Endothelial cell of umbilical vein (primary cell): ENCODE measurements at regions of chr10 and their contacts with region 1.

Region 1: DNA sequence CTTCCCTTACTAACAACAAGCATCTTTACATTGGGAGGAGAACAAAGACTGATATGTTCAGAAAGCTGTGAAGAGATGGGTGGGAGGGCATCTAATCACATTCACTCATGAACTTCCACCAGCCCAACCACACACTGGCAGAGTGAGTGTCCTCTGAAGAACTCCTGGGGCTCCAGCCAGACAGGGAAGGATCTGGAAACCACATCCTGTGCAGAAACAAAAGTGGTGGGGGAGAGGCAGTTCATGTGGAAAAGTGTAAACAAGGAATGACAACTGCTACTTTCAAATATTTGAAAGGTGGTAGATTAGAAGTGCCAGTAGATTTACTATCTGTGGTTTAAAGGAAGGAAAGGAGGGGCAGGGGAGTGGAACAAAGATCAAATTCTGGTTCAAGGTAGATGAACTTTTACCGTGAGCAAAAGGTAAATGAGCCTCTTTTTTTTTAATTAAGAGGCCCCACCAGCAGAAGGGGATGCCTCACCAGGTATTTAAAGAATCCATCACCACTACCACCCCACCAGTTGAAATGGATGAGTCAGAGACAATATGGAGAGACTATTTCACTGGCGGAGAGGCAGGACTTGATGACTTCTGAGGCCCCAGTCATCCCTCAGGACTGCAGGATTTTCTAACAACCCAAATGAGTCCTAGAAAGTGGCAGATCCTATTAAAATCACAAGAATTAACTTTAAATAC is 34.5 kb downstream of the GOT1 start:
- DNase-seq: peak; percentile 57
- H3K4me3 ChIP-seq: no peak overlapping the region
- H3K27ac ChIP-seq: peak overlapping the region; percentile 32
- H3K4me1 ChIP-seq: peaks cover 24% of the 10 kb centered on the region
- H3K27me3 ChIP-seq: no peaks in the 10 kb centered on the region
- CTCF ChIP-seq: no peak
- POLR2A ChIP-seq: no peak

Region 2: GRCh38 chr10:99360934-99361333 is 35.0 kb before region 1 on chr10:
- CTCF ChIA-PET with region 1: no interaction called
- POLR2A ChIA-PET with region 1: no interaction called
- dilution Hi-C with region 1: no loop called
- intact Hi-C with region 1: no loop called
- DNase-seq: no peak
- H3K4me3 ChIP-seq: no peak overlapping the region
- H3K27ac ChIP-seq: no peak overlapping the region
- H3K4me1 ChIP-seq: no peaks in the 10 kb centered on the region
- H3K27me3 ChIP-seq: peaks cover 9 to 11% of the 10 kb centered on the region in 2 experiments
- CTCF ChIP-seq: no peak
- POLR2A ChIP-seq: no peak

Region 3: DNA sequence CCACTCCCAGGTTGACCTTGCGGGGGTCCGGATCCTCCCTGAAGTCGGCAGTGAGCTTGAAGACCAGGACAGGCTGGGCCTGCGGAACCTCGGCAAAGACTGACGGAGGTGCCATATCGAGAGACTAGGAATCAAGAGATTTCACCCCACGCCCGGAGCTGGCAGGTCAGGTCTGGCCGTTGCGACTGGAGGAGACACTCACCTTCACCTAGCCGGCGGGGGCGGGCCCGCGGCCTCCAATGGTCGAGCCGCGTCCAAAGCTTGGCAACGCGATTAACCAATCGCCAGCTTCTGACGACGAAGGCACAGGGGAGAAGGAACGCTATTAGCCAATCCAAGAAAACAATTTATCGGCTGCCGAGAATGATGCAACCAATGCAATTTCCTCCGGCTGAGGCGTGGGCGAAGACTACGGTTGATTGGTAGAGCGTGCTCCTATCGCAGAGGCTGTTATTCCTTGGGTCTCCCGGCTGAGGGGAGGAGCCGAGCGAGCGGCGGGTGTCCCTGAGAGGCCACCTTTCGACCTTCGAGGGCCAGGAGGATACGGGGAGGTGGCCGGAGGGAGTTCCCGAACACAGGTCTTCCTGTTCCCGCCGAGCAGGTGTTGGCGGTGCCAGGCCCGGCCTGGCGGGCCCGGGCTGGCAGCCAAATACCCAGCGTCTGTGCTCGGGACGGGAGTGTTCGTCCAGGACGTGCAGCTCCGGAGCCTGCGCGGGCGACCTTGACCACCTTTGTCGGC is 34.7 kb after region 1 on chr10 and contains the start of gene GOT1:
- CTCF ChIA-PET with region 1: interaction called, 151 read pairs
- POLR2A ChIA-PET with region 1: no interaction called
- dilution Hi-C with region 1: no loop called
- intact Hi-C with region 1: loop called (anchors 1 kb)
- DNase-seq: peak; percentile 99
- H3K4me3 ChIP-seq: peak within 1 kb of the TSS; percentile 53 to 87 (median 74)
- H3K27ac ChIP-seq: peak within 1 kb of the TSS; percentile 42
- H3K4me1 ChIP-seq: peaks cover 14% of the 10 kb centered on the region
- H3K27me3 ChIP-seq: no peaks in the 10 kb centered on the region
- CTCF ChIP-seq: no peak
- POLR2A ChIP-seq: peak; percentile 68
- total RNA-seq, gene GOT1: 36.3 and 40.7 TPM in 2 replicates

Region 4: DNA sequence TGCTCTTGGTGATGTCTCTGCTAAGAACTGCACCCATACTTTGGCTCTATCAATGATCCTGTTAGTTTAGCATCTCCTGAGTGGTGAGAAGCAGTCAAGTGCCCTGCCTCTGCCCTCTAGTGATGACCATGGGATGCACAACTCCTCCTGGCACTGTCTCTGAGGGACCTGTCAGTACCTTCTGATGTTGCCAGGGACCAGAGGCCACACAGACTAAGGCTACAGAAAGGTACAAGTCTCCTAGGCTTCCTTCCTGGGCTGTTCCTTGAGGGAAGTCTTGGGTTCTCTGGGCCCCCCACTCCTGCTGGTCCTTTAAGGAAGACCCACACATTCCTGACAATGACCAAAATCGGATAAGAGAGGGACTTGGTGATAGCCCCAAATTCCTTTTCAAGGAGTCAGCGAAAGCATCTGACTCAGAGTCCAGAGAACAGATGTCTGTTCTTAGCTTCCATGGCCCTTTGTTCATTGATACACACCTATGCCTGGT is 152.2 kb after region 1 on chr10:
- CTCF ChIA-PET with region 1: interaction called, 5 read pairs
- POLR2A ChIA-PET with region 1: no interaction called
- dilution Hi-C with region 1: no loop called
- intact Hi-C with region 1: loop called (anchors 5 kb)
- DNase-seq: peak; percentile 47
- H3K4me3 ChIP-seq: no peak overlapping the region
- H3K27ac ChIP-seq: no peak overlapping the region
- H3K4me1 ChIP-seq: no peaks in the 10 kb centered on the region
- H3K27me3 ChIP-seq: peaks cover 24 to 48% of the 10 kb centered on the region in 2 experiments
- CTCF ChIP-seq: peak in 1 of 2 donors; percentile 67
- POLR2A ChIP-seq: no peak

Region 5: DNA sequence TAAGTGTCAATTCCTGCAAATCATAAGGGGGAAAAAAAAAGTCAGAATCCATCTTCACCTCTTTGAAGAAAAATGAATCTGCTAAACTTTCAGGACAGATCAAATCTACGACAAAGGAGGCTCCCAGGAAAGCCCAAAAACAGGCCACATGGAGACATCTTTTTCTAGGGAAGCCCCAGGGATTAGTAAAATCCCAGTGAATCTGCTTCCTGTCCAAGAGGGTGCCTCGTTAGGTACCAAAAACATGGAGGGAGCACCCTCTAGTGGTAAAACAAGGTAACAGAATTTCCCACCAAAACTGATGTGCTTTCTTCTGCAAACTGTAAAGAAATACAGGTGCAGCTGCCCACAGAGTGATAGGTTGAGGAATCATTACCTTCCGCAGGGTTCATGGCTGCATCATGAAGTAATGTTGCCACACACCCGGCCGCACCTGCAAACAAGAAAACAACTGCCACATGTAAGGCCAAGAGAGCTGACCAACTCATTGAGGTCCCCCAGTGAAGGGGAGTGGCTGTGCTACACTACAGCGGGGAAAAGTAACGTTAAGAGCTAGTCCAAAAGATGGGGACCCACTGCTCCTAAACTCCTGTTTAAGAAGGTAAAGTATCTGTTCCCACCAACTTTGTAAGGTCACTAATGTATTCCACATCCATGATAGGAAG is 216.4 kb after region 1 on chr10:
- CTCF ChIA-PET with region 1: interaction called, 65 read pairs
- POLR2A ChIA-PET with region 1: no interaction called
- dilution Hi-C with region 1: no loop called
- intact Hi-C with region 1: loop called (anchors 1 kb)
- DNase-seq: peak; percentile 71
- H3K4me3 ChIP-seq: no peak overlapping the region
- H3K27ac ChIP-seq: no peak overlapping the region
- H3K4me1 ChIP-seq: peaks cover 2% of the 10 kb centered on the region
- H3K27me3 ChIP-seq: no peaks in the 10 kb centered on the region
- CTCF ChIP-seq: peak; percentile 66 to 67
- POLR2A ChIP-seq: no peak

Region 6: DNA sequence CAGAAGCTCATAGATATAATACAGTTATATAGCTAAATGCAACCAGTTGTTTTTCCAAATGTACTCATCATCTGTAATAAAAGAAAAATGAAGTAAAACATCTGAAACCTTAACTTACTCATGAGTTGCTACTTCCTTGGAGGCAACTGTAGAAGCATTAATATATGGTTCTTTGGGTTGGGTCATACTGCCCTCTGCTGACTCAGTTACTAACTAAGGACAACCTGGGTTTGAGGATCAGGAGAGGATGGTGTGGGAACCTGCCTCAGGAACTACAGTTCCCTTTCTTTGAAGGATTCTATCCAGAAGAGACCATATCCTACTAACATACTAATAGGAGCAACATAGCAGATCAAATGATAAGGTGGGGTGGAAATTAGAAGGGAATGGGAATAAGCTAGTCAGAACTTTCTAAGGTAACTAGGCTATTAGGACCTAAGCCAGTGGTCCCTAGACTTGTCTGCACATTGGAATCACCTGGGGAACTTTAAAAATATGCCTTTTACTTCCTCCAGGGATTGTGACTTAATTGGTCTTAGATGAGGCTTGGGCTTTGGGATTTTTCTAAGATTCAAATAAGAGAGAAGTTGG is 315.3 kb after region 1 on chr10:
- CTCF ChIA-PET with region 1: no interaction called
- POLR2A ChIA-PET with region 1: no interaction called
- dilution Hi-C with region 1: no loop called
- intact Hi-C with region 1: loop called (anchors 2 kb)
- DNase-seq: peak; percentile 67
- H3K4me3 ChIP-seq: no peak overlapping the region
- H3K27ac ChIP-seq: no peak overlapping the region
- H3K4me1 ChIP-seq: no peaks in the 10 kb centered on the region
- H3K27me3 ChIP-seq: no peaks in the 10 kb centered on the region
- CTCF ChIP-seq: peak; percentile 36 to 46
- POLR2A ChIP-seq: no peak